Activated CD4-positive, alpha-beta T cell treated with anti-CD3 and anti-CD28 coated beads for 36 hours (primary cell): ENCODE measurements at regions of chr6 and their contacts with region 1.

Region 1: GRCh38 chr6:33579828-33580714 is at the start of gene BAK1:
- DNase-seq: peak; percentile 92
- ATAC-seq: peak; percentile 95
- H3K4me3 Mint-ChIP-seq: peak within 1 kb of the TSS; percentile 95
- H3K27ac Mint-ChIP-seq: peak within 1 kb of the TSS; percentile 98
- H3K4me1 Mint-ChIP-seq: peaks cover 31% of the 10 kb centered on the region
- H3K27me3 Mint-ChIP-seq: no peaks in the 10 kb centered on the region
- total RNA-seq, gene BAK1: 37.0 to 43.3 TPM

Region 2: DNA sequence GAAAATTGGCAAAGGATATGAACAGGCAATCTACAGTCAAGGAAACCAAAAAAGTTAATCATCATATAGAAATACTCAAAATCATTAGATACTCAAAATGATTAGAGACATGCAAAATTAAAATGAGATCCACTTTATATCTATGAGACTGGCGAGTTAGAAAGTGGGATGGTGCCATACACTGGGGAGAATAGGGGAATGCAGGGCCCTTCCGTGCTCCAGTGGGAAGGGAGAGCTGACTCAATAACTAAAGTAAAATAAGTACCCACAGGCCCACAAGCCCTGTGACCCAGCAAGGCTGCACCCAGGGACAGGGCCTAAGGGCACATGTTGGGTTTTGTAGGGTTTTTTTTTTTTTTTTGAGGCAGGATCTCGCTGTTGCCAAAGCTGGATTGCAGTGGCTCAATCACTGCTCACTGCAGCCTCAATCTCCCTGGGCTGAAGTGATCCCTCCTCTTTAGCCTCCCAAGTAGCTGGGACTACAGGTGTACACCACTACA is 44.9 kb before region 1 on chr6:
- CTCF ChIA-PET with region 1: no interaction called
- POLR2A ChIA-PET with region 1: interaction called, 3 read pairs
- intact Hi-C with region 1: loop called in 1 of 2 experiments (anchors 2 kb)
- DNase-seq: no peak
- ATAC-seq: no peak
- H3K4me3 Mint-ChIP-seq: no peak overlapping the region
- H3K27ac Mint-ChIP-seq: no peak overlapping the region
- H3K4me1 Mint-ChIP-seq: peaks cover 19% of the 10 kb centered on the region
- H3K27me3 Mint-ChIP-seq: no peaks in the 10 kb centered on the region